ENCODE measurements at regions of chr13 and their contacts with region 1.

Region 1: DNA sequence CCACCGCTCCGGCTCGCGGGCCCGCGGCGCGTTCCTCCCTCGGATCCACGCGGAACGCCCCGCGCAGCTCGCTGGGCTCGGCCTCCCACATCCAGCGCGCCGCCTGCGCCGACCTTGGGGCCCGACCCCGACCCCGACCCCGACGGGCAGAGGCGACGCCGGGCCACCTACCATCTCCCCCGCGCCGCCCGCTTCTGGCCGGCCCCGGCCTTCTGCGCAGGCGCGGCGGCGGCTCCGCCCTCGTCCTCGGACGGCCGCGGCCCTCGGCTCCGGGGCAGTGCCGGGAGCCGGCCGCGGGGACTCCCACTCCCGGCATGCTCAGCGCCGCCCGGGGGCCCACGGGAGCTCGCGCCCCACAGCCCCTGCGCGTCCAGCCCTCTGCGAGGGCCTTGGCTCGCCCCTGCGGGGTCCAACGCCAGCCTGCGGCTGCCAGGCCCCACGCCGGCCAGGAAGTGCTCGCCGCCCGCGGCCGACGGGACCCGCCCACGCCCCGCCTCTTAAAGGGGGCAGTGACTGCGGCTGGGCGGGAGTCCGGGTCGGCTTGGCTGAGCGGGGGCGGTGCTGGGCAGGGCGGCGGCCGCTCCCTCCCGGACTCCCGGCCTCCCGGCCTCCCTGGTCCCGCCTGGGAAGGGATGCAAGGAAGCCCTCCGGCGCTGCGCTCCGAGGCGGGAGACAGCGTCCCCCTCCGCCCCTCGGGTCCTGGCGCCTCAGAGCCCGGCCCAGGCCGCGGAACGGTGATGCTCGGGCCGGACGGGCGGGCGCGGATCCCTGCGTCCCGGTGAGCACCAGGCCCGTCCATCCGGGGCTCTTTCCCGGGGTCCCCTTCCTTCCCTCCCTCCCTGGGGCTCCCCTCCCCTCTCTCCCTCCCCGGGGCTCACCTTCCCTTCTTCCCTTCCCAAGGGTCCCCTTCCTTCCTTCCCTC is at the start of gene DCUN1D2:
- DNase-seq: peak; percentile 89
- ATAC-seq: peak; percentile 79
- H3K4me3 ChIP-seq: peak within 1 kb of the TSS; percentile 92
- H3K27ac ChIP-seq: peak within 1 kb of the TSS; percentile 94
- H3K4me1 ChIP-seq: peaks cover 54% of the 10 kb centered on the region
- H3K27me3 ChIP-seq: no peaks in the 10 kb centered on the region
- CTCF ChIP-seq: no peak
- total RNA-seq, gene DCUN1D2: 11.6 and 15.0 TPM in 2 replicates

Region 2: DNA sequence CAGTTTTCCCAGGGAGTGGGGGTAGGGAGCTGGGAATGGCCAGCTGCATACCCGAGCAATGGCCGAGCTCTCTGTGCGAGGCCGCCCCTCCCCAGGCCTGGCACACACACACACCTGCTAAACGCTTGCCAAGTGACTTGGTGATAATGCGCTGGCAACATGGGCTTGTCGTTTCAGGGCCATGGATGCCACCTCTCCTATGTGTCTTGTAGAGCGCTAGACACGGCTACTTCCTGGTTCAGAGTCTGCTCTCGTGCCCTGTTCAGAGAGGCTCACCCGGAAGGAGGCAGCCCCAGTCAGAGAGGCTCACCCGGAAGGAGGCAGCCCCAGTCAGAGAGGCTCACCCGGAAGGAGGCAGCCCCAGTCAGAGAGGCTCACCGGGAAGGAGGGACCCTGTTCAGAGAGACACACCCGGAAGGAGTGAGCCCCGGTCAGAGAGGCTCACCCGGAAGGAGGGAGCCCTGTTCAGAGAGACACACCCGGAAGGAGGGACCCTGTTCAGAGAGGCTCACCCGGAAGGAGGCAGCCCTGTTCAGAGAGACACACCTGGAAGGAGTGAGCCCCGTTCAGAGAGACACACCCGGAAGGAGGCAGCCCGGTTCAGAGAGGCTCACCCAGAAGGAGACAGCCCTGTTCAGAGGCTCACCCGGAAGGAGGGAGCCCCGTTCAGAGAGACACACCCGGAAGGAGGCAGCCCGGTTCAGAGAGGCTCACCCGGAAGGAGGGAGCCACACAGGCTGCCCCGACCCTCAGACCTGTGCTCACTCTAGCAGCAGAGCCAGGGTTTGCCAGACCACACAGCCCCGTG is 41.7 kb before region 1 on chr13:
- CTCF ChIA-PET with region 1: no interaction called
- POLR2A ChIA-PET with region 1: no interaction called
- intact Hi-C with region 1: loop called (anchors 2 kb)
- DNase-seq: peak; percentile 93
- ATAC-seq: peak; percentile 91
- H3K4me3 ChIP-seq: peak overlapping the region; percentile 71
- H3K27ac ChIP-seq: peak overlapping the region; percentile 86
- H3K4me1 ChIP-seq: peaks cover 13% of the 10 kb centered on the region
- H3K27me3 ChIP-seq: no peaks in the 10 kb centered on the region
- CTCF ChIP-seq: no peak

Measured in PC-3 (cell line).